Mammary epithelial cell (primary cell): ENCODE measurements at regions of chr1 and their contacts with region 1.

Region 1: DNA sequence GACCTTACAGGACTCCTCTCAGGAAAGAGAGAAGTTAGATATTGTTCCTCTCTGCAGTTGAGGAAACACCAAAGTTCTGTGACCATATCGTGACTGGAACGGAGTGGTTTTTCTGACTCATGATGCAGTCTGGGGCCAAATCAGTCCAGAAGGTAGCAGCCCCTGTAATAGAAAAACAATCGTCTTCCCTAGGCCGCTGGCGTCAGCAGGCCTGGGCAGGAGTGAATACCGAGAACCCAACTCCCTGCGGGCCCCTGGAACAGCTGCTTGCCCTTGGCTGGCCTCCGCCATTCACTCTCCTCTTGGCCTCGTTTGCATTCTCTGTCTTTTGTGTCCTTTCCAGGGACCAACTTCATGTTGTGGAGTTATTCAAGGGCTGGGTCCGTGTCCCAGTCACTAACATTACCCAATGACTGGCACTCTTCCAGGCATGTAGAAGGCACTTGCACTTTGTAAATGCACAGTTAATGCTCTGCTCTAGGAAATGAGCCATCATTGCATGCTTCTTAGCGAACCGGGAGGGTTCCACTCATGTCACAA is 10.9 kb upstream of the CD101 start:
- DNase-seq: peak; percentile 97
- H3K4me3 ChIP-seq: no peak overlapping the region
- H3K27ac ChIP-seq: peak overlapping the region; percentile 74
- H3K4me1 ChIP-seq: peaks cover 46% of the 10 kb centered on the region
- H3K27me3 ChIP-seq: no peaks in the 10 kb centered on the region
- CTCF ChIP-seq: no peak

Region 2: DNA sequence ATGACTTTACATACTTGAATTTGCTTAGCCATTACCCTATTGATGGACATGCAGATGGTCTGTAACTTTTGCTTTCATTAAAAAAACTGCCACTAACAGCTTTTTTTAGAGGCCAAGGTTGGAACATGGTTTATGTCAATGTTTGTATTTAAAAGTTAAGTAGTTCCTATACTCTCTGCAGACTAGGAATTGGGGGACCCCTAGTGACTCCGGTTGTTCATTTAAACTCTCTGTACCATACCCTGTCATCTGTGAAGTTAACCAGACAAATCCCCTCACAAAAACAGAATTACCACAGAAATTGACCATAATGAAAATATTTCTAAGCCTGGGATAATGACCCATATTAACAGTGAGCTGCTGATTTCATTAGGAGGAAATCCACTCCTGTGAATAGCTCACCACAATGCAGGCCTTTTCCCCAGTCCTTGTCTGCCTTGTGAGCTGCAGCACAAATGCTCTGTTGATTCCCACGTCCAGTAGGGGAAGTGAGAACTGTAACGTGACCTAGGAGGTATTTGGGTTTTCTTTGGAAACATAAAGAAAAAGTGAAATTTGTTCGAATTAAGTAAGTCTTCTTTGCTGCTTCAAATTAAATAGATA is 19.3 kb before region 1 on chr1:
- CTCF ChIA-PET with region 1: no interaction called
- dilution Hi-C with region 1: no loop called
- in situ Hi-C with region 1: no loop called
- intact Hi-C with region 1: no loop called
- DNase-seq: no peak
- H3K4me3 ChIP-seq: no peak overlapping the region
- H3K27ac ChIP-seq: no peak overlapping the region
- H3K4me1 ChIP-seq: peaks cover 15% of the 10 kb centered on the region
- H3K27me3 ChIP-seq: no peaks in the 10 kb centered on the region
- CTCF ChIP-seq: no peak

Region 3: DNA sequence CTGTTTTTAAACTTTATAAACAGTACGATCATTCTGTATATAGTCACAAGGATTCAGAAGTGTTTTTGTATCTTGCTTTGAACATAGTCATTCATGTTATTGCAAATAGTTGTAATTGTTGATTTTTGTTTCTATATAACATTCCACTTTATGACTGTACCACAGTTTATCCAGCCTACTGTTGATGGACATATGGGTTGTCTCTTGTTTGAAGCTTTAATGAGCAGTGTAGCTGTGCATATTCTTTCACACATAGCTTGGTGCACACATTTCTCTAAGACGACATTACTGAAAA is 17.0 kb after region 1 on chr1:
- CTCF ChIA-PET with region 1: no interaction called
- dilution Hi-C with region 1: no loop called
- in situ Hi-C with region 1: no loop called
- intact Hi-C with region 1: loop called (anchors 2 kb)
- DNase-seq: no peak
- H3K4me3 ChIP-seq: no peak overlapping the region
- H3K27ac ChIP-seq: no peak overlapping the region
- H3K4me1 ChIP-seq: peaks cover 11% of the 10 kb centered on the region
- H3K27me3 ChIP-seq: no peaks in the 10 kb centered on the region
- CTCF ChIP-seq: no peak

Region 4: DNA sequence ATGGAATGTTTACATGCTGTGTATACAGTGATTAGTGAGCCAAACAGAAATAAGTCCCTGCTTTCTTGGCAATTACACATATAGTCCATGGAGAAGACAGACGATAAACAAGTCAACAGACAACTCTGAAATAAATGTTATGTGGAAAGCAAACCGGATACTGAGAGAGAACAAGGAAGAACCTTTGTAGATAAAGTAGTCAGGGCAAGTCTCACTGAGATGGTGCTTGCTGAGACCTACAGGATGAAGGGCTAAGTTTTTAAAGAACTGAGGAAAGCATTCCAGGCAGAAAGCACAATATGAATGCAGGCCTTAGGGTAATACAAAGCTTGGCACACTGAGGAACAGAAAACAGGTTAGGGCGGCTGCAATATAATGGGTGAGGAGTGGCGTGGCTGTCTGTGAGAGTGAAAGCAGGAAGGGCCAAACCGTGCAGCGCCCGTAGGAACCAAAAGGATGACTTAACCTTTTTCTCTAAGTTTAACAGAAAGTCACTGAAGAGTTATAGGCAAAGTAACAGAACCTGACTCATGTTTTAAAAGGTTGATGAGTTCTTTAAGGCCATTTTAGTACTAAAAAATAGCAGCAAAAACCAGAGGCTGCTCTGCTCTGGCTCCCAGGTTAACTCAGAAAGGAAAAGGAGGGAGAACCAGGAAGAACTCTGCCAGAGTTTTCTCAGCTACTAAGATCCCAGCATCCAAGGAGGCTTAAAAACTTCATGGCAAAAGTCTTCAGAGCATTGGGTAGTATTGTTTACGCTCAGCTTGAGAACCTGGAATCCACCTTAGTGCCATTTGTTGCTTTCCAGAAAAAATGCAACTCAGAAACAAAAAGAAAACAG is 60.8 kb after region 1 on chr1:
- CTCF ChIA-PET with region 1: no interaction called
- dilution Hi-C with region 1: no loop called
- in situ Hi-C with region 1: no loop called
- intact Hi-C with region 1: loop called (anchors 5 kb)
- DNase-seq: peak; percentile 46
- H3K4me3 ChIP-seq: peak overlapping the region in 2 of 3 experiments; percentile 19 to 25
- H3K27ac ChIP-seq: peak overlapping the region; percentile 43
- H3K4me1 ChIP-seq: peaks cover 5% of the 10 kb centered on the region
- H3K27me3 ChIP-seq: no peaks in the 10 kb centered on the region
- CTCF ChIP-seq: no peak